Activated CD4-positive, alpha-beta T cell treated with anti-CD3 and anti-CD28 coated beads for 36 hours (primary cell): ENCODE measurements at regions of chr3 and their contacts with region 1.

Region 1: GRCh38 chr3:32313723-32314473 is 75.4 kb downstream of the CMTM8 start:
- DNase-seq: peak; percentile 54
- ATAC-seq: peak; percentile 97
- H3K4me3 Mint-ChIP-seq: peak overlapping the region; percentile 62
- H3K27ac Mint-ChIP-seq: peak overlapping the region; percentile 70
- H3K4me1 Mint-ChIP-seq: peaks cover 24% of the 10 kb centered on the region
- H3K27me3 Mint-ChIP-seq: no peaks in the 10 kb centered on the region

Region 2: DNA sequence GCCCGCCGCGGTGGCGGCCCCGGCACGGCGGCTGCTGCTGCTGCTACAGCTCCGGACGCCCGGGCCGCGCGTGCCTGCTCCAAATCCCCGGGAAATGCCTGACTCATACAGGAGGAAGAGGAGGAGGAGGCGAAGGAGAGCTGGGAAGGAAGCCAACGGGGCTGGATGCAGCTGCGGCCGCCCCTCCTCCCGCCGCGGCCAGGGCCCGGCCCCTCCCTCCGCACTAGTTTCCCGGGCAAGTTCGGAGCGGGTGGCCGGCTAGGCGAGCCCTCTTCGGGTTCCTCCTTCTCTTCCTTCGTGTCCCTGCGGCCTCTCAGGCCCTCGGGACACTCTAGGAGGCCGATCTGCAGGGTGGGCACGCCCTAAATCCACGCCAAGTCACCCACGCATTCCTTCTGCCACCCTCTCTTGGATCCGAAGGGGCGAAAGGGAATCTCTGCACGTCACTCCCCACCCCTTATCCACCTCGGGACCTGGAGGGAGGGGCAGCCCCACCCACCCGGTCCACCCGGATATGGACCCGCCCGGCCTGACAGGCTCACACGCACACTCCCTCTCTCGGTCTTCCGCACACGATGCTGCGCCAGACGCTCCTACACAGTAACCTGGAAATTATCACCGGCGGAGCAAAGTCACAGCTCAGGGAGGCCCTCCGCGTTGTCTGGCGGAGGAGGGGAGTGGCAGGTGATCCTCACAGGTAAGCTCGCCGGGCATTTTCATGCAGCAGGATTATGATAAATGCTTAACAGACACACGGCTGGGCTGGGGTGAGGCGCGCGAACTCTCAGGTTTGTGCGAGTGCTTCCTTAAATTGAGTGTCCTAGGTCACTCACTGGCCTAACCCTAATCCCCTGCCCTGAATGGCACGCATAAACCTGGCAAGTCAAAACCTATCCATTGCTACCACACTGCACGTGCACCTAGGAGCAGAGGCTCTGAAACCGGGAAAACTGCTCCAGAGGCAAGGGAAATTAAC is 332.4 kb before region 1 on chr3 and contains the starts of genes OSBPL10 and ZNF860:
- CTCF ChIA-PET with region 1: no interaction called
- POLR2A ChIA-PET with region 1: no interaction called
- intact Hi-C with region 1: no loop called
- DNase-seq: peak; percentile 58
- ATAC-seq: peak; percentile 44
- H3K4me3 Mint-ChIP-seq: peak within 1 kb of the TSS; percentile 74
- H3K27ac Mint-ChIP-seq: peak within 1 kb of the TSS; percentile 53
- H3K4me1 Mint-ChIP-seq: peaks cover 20% of the 10 kb centered on the region
- H3K27me3 Mint-ChIP-seq: peaks cover 39% of the 10 kb centered on the region
- total RNA-seq, gene OSBPL10: 11.2 to 11.8 TPM
- total RNA-seq, gene ZNF860: 0.11 to 0.30 TPM

Region 3: GRCh38 chr3:32302601-32303398 is 11.1 kb before region 1 on chr3:
- CTCF ChIA-PET with region 1: interaction called, 13 read pairs
- POLR2A ChIA-PET with region 1: no interaction called
- intact Hi-C with region 1: no loop called
- DNase-seq: no peak
- ATAC-seq: no peak
- H3K4me3 Mint-ChIP-seq: peak overlapping the region; percentile 55
- H3K27ac Mint-ChIP-seq: peak overlapping the region; percentile 85
- H3K4me1 Mint-ChIP-seq: peaks cover 57% of the 10 kb centered on the region
- H3K27me3 Mint-ChIP-seq: no peaks in the 10 kb centered on the region